Activated naive CD4-positive, alpha-beta T cell treated with anti-CD3 and anti-CD28 coated beads for 36 hours (primary cell): ENCODE measurements at regions of chr11 and their contacts with region 1.

Region 1: DNA sequence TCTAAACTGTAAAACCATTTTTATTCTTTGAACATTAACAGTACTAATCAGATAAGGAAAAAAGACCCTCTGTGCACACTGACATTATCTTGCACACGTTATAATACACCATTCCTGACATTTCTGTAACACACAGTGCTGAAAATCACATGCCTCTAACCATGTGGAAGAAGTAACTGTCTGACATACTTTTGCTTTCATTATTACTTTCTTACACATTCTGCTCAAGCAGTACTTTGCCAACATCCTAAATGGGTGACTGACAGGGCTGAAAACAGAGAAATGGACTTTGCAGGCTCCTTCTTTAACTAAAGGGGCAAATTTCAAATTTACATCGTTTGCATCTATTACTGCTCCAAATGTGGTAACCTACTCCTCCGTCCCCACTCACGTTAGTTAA is 22.8 kb upstream of the TP53AIP1 start:
- DNase-seq: no peak
- H3K4me3 Mint-ChIP-seq: no peak overlapping the region
- H3K27ac Mint-ChIP-seq: no peak overlapping the region
- H3K4me1 Mint-ChIP-seq: peaks cover 25% of the 10 kb centered on the region
- H3K27me3 Mint-ChIP-seq: no peaks in the 10 kb centered on the region

Region 2: GRCh38 chr11:129006161-129006560 is 40.7 kb after region 1 on chr11:
- CTCF ChIA-PET with region 1: no interaction called
- intact Hi-C with region 1: no loop called
- DNase-seq: no peak
- H3K4me3 Mint-ChIP-seq: no peak overlapping the region
- H3K27ac Mint-ChIP-seq: no peak overlapping the region
- H3K4me1 Mint-ChIP-seq: no peaks in the 10 kb centered on the region
- H3K27me3 Mint-ChIP-seq: no peaks in the 10 kb centered on the region

Region 3: GRCh38 chr11:129100193-129100592 is 134.7 kb after region 1 on chr11:
- CTCF ChIA-PET with region 1: no interaction called
- intact Hi-C with region 1: no loop called
- DNase-seq: no peak
- H3K4me3 Mint-ChIP-seq: no peak overlapping the region
- H3K27ac Mint-ChIP-seq: no peak overlapping the region
- H3K4me1 Mint-ChIP-seq: no peaks in the 10 kb centered on the region
- H3K27me3 Mint-ChIP-seq: no peaks in the 10 kb centered on the region

Region 4: GRCh38 chr11:129117595-129118350 is 152.3 kb after region 1 on chr11:
- CTCF ChIA-PET with region 1: no interaction called
- intact Hi-C with region 1: loop called (anchors 1 kb)
- DNase-seq: peak; percentile 64
- H3K4me3 Mint-ChIP-seq: no peak overlapping the region
- H3K27ac Mint-ChIP-seq: no peak overlapping the region
- H3K4me1 Mint-ChIP-seq: peaks cover 3% of the 10 kb centered on the region
- H3K27me3 Mint-ChIP-seq: no peaks in the 10 kb centered on the region